ENCODE measurements at regions of chr11 and their contacts with region 1.

Region 1: DNA sequence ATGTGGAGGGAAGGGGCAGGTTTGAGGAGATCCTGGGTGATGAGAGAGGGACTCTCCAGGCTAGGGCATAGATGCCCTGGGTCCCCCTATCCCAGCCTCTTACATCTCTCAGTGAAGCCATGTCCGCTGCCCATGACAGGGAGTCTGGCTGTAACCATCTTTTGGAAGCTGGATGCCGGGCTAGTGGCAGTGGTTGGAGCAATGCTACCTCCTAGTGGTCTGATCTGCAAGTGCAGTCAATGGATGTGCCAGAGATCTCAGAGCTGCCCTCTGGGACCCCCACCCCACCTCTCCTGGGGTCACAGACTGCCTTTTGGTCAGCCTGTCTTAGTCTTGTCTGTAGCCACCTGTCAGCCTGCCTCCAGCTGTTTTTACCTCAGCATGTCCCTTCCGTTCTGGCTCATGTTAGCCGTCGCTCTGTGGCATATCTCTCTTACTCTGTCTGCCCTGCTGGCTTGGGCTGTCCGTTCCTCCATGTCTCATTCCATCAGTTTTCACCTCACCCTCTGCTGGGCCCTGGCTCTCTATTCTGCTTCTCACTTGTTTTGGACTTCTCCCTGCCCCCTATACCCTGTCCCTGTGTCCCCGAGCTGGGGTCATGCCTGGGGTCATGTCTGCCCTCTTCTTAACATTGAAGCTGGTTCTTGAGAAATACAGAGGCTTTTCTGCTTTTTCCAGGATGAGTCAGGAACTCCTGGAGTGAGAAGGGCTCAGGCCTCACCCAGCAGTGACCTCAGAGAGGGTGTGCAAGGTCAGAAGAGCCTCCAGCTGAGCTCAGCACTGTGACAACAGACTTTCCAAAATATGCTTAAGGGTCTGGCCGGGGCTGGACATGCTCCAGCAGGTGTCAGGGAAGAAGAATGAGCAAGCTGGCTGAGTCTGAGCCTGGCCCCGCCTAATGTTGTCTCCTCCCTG is 52.0 kb upstream of the THY1 start:
- DNase-seq: peak; percentile 66
- H3K4me3 Mint-ChIP-seq: no peak overlapping the region
- H3K27ac Mint-ChIP-seq: no peak overlapping the region
- H3K4me1 Mint-ChIP-seq: no peaks in the 10 kb centered on the region
- H3K27me3 Mint-ChIP-seq: peaks cover 28% of the 10 kb centered on the region

Region 2: GRCh38 chr11:119334174-119334930 is 140.6 kb before region 1 on chr11 and contains the start of gene RNF26:
- CTCF ChIA-PET with region 1: interaction called, 11 read pairs
- DNase-seq: peak; percentile 97
- H3K4me3 Mint-ChIP-seq: peak within 1 kb of the TSS; percentile 99
- H3K27ac Mint-ChIP-seq: peak within 1 kb of the TSS; percentile 97
- H3K4me1 Mint-ChIP-seq: peaks cover 62% of the 10 kb centered on the region
- H3K27me3 Mint-ChIP-seq: peaks cover 25% of the 10 kb centered on the region

Region 3: DNA sequence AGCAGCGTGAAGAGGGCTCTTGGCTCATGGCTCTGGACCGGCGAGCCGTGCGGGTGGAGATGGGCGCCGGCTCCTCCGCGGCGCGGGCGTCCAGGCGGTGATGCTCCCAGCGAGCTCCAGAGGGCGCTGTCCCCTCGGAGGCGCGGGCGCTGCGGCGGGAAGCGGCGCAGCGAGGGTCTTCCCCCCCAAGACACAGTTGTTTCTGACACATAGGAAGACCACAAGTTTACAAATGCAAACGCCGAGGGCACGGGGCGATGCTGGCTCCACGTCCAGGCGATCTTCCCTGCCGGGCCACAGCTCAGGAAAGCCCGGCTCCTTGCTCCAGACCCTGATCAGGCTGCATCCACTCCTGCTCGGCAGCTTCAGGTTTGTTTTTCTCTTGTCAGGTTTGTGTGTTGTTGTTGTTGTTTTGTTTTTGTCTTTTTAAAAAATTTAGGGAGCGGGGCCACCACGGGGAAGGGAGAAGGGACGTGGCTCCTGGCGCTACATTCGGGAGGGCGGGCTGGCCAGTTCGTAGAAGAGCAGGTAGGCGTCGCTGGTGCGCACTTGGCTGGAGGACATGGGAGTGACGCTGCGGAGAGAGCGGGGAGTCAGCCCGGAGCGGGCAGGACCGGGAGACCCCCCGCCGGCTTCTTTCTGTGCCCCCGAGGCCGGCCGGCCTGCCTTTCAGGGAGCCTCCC is 118.4 kb before region 1 on chr11:
- CTCF ChIA-PET with region 1: interaction called, 67 read pairs
- DNase-seq: peak; percentile 83
- H3K4me3 Mint-ChIP-seq: peak overlapping the region; percentile 85
- H3K27ac Mint-ChIP-seq: peak overlapping the region; percentile 69
- H3K4me1 Mint-ChIP-seq: peaks cover 21% of the 10 kb centered on the region
- H3K27me3 Mint-ChIP-seq: peaks cover 85% of the 10 kb centered on the region

Region 4: GRCh38 chr11:119363851-119364590 is 110.9 kb before region 1 on chr11:
- CTCF ChIA-PET with region 1: interaction called, 18 read pairs
- DNase-seq: peak; percentile 67
- H3K4me3 Mint-ChIP-seq: peak overlapping the region; percentile 66
- H3K27ac Mint-ChIP-seq: no peak overlapping the region
- H3K4me1 Mint-ChIP-seq: peaks cover 17% of the 10 kb centered on the region
- H3K27me3 Mint-ChIP-seq: peaks cover 90% of the 10 kb centered on the region

Region 5: DNA sequence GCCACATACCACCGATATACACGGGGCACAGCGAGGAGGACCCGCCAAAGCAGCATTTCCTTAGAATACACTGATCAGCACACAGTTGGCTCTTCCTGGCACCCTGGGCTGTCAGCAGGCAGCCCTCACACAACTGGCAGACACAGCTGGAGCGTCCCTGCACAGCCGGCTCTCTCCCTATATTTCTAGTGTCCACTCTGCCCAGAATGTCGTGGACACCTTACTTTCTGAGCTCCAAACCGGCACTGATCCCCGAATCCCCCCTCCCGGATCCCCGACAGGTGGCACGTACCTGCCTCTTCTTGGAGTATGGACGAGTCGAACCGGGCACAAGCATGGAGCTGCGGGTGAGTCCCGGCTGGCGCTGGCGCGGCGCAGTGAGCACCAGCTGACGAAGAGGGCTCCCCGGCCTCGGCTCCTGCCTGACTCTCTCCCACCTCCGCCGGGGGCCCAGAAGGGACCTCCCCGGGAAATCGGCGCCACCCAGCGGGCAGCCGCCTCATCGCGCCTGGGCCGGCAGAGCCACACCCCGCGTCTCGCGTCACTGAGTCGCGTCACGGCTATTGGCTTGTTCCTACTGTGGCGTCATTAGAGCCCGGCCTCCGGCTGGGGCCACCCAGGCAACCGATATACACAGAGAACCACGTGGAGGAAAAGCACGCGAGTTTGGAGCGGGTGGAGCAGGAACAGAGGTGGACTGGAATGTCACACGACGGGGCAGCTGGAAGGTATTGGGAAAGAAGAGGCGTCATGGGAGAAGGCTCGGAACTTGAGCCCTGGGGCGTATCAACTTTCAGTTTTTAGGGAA is 93.6 kb before region 1 on chr11 and contains the start of gene USP2:
- CTCF ChIA-PET with region 1: interaction called, 16 read pairs
- DNase-seq: peak; percentile 97
- H3K4me3 Mint-ChIP-seq: no peak within 1 kb of the TSS
- H3K27ac Mint-ChIP-seq: no peak within 1 kb of the TSS
- H3K4me1 Mint-ChIP-seq: peaks cover 8% of the 10 kb centered on the region
- H3K27me3 Mint-ChIP-seq: peaks cover 34% of the 10 kb centered on the region

Region 6: DNA sequence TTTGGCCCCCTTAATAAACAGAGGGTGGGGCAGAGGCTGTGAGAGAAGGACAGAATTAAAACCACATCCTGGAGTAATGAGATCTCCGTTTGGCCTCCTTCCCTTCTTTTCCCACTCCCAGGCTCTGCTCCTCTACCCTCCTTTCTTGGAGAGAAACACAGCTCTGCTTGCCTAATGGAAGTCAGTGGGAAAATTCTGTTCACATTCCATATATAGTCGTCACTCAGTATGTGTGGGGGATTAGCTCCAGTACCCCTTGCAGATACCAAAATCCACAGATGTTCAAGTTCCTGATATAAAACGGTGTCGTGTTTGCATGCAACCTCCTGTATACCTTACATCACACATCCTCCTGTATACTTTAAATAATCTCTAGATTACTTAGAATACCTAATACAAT is 14.4 kb before region 1 on chr11:
- CTCF ChIA-PET with region 1: interaction called, 10 read pairs
- DNase-seq: no peak
- H3K4me3 Mint-ChIP-seq: no peak overlapping the region
- H3K27ac Mint-ChIP-seq: no peak overlapping the region
- H3K4me1 Mint-ChIP-seq: no peaks in the 10 kb centered on the region
- H3K27me3 Mint-ChIP-seq: peaks cover 47% of the 10 kb centered on the region